ENCODE measurements at regions of chr7 and their contacts with region 1.

Region 1: GRCh38 chr7:151315038-151315655 is 26.5 kb upstream of the NUB1 start:
- DNase-seq: peak; percentile 80 to 82 (median 81)
- H3K4me3 ChIP-seq: no peak overlapping the region
- H3K4me3 Mint-ChIP-seq: peak overlapping the region in 5 of 8 donors; percentile 36 to 69 (median 66)
- H3K27ac ChIP-seq: no peak overlapping the region
- H3K27ac Mint-ChIP-seq: peak overlapping the region in 4 of 7 donors; percentile 38 to 80 (median 74)
- H3K4me1 ChIP-seq: peaks cover 4% of the 10 kb centered on the region
- H3K4me1 Mint-ChIP-seq: peaks cover 2 to 8% (median 5%) of the 10 kb centered on the region in 4 donors
- H3K27me3 ChIP-seq: no peaks in the 10 kb centered on the region
- H3K27me3 Mint-ChIP-seq: peaks cover 0 to 1% of the 10 kb centered on the region in 2 donors

Region 2: DNA sequence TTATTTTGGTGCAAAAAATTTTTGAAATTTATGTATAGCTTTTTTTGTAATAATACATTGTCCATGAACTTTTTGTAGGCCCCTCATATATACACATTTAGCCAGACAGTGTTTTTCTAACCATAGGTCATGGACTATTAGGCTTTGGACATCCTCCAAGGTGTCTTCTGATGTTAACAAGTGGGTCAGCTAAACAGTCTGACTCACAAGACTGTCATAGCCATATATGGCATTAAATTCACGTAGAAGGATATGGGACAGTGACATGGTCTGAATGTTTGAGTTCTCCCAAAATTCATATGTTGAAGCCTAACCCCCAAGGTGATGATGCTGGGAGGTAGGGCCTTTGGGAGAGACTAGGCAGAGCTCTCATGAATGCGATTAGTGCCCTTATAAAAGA is 12.5 kb after region 1 on chr7:
- CTCF ChIA-PET with region 1: interaction called, 21 read pairs
- POLR2A ChIA-PET with region 1: no interaction called
- intact Hi-C with region 1: no loop called
- DNase-seq: no peak
- H3K4me3 ChIP-seq: no peak overlapping the region
- H3K4me3 Mint-ChIP-seq: no peak overlapping the region
- H3K27ac ChIP-seq: no peak overlapping the region
- H3K27ac Mint-ChIP-seq: no peak overlapping the region
- H3K4me1 ChIP-seq: no peaks in the 10 kb centered on the region
- H3K4me1 Mint-ChIP-seq: no peaks in the 10 kb centered on the region
- H3K27me3 ChIP-seq: no peaks in the 10 kb centered on the region
- H3K27me3 Mint-ChIP-seq: peaks cover 0 to 1% of the 10 kb centered on the region in 2 donors

Region 3: DNA sequence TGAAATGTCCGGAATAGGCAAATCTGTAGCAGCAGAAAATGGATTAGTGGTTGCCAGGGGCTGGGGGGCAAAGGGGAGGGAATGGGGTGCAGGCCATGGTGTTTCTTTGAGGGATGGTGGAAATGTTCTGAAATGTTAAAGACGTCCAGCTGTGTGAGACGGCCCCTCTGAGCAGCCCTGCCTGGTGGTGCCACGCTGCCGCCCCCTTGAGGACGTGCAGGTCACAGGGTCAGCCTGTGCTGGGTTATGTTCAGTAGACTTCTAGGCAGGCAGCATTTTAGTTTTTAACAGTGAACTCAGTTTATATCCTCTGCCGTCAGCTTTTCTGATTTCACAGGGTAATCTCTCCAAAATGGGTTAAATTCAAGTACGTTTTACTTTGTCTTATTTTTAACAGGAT is 35.9 kb after region 1 on chr7:
- CTCF ChIA-PET with region 1: interaction called, 178 read pairs
- POLR2A ChIA-PET with region 1: interaction called, 20 read pairs
- intact Hi-C with region 1: loop called (anchors 1 kb)
- DNase-seq: no peak
- H3K4me3 ChIP-seq: no peak overlapping the region
- H3K4me3 Mint-ChIP-seq: peak overlapping the region; percentile 32 to 82 (median 73)
- H3K27ac ChIP-seq: peak overlapping the region; percentile 65
- H3K27ac Mint-ChIP-seq: peak overlapping the region; percentile 78 to 95 (median 89)
- H3K4me1 ChIP-seq: peaks cover 38% of the 10 kb centered on the region
- H3K4me1 Mint-ChIP-seq: peaks cover 33 to 61% (median 47%) of the 10 kb centered on the region in 4 donors
- H3K27me3 ChIP-seq: no peaks in the 10 kb centered on the region
- H3K27me3 Mint-ChIP-seq: no peaks in the 10 kb centered on the region

Region 4: GRCh38 chr7:151631968-151632749 is 317.0 kb after region 1 on chr7:
- CTCF ChIA-PET with region 1: interaction called, 11 read pairs
- POLR2A ChIA-PET with region 1: no interaction called
- intact Hi-C with region 1: no loop called
- DNase-seq: peak; percentile 84 to 91 (median 88)
- H3K4me3 ChIP-seq: peak overlapping the region; percentile 73 to 83
- H3K4me3 Mint-ChIP-seq: peak overlapping the region; percentile 89 to 99 (median 96)
- H3K27ac ChIP-seq: peak overlapping the region; percentile 78
- H3K27ac Mint-ChIP-seq: peak overlapping the region; percentile 94 to 99 (median 97)
- H3K4me1 ChIP-seq: peaks cover 18% of the 10 kb centered on the region
- H3K4me1 Mint-ChIP-seq: peaks cover 18 to 38% (median 21%) of the 10 kb centered on the region in 4 donors
- H3K27me3 ChIP-seq: no peaks in the 10 kb centered on the region
- H3K27me3 Mint-ChIP-seq: no peaks in the 10 kb centered on the region

Region 5: DNA sequence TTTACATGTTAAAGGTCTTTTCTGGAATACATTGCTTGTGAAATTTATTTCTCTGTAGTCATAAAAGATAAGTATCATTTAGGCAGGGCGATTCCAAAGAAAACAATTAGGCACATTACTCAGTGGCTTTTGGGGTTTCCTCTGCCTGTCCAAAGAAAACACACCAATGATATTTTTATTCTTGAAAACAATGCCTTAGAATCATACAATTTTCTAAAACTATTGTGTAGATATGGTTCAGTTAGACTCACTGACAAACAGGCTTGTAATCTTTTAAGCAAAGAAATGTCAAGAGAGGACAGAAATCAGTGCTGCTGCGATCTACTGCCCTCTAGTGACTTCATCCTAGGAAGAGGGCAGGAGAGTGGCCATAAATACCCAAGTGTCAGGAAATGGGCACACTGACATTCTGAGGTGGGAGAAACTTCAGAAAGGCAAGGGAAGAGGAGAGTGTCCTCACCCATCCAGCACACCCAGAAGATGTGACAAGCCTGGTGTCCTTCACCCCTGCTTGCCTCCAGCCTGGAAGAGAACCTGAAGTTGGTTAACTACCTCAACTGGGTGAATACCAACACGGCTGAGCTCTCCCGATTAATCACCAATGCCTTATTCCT is 830.8 kb after region 1 on chr7:
- CTCF ChIA-PET with region 1: no interaction called
- POLR2A ChIA-PET with region 1: no interaction called
- intact Hi-C with region 1: loop called (anchors 5 kb)
- DNase-seq: peak in 4 of 5 donors; percentile 41 to 45 (median 44)
- H3K4me3 ChIP-seq: peak overlapping the region in 1 of 2 donors; percentile 2
- H3K4me3 Mint-ChIP-seq: peak overlapping the region in 6 of 8 donors; percentile 46 to 83 (median 72)
- H3K27ac ChIP-seq: no peak overlapping the region
- H3K27ac Mint-ChIP-seq: peak overlapping the region; percentile 48 to 95 (median 89)
- H3K4me1 ChIP-seq: peaks cover 47% of the 10 kb centered on the region
- H3K4me1 Mint-ChIP-seq: peaks cover 38 to 48% (median 42%) of the 10 kb centered on the region in 4 donors
- H3K27me3 ChIP-seq: no peaks in the 10 kb centered on the region
- H3K27me3 Mint-ChIP-seq: no peaks in the 10 kb centered on the region